Colonic mucosa (tissue), 4 donors: ENCODE measurements at regions of chr10 and their contacts with region 1.

Region 1: DNA sequence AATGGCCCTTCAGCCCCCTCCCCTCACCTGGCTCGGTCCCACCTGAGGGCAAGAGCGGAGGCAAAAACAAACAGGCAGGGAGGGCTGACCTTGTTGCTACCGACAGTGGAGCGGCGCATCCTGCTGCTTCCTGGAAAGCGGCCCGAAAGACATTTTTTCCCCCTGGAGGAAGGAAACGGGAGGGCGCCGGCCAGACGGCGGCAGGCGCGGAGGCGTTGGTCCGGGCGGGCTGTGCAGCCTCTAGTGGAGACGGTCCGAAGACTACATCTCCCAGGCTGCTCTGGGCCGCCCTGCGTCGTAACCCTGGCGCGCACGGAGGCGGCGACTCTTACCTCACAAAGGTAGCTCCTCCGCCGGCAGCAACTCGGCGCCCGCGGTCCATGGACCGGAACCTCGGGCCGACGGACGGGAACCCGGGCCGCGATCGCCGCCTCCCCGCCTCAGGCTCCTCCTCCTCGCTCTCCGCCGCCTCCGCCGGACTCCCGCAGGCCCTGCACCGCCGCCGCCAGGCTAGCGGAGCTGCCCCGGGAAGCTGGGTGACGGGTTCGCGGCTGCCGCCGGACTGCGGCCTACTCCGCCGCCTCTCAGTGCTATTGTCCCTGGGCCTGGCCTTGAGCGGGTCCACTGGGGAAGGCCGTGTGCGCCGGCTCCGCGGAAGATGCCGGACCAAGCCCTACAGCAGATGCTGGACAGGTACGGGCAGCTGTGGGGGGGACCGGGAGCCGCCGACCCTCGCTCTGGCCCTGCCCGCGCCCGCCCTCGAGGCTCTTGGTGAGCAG is at the starts of genes CPEB3 and MARCHF5:
- DNase-seq: peak; percentile 96
- H3K4me3 ChIP-seq: peak within 1 kb of the TSS; percentile 92
- H3K27ac ChIP-seq: peak within 1 kb of the TSS; percentile 92
- H3K4me1 ChIP-seq: no peaks in the 10 kb centered on the region
- H3K27me3 ChIP-seq: no peaks in the 10 kb centered on the region
- CTCF ChIP-seq: peak; percentile 63
- total RNA-seq, gene CPEB3: 4.4 to 7.9 TPM
- total RNA-seq, gene MARCHF5: 37.3 to 42.8 TPM

Region 2: GRCh38 chr10:92087750-92088395 is 203.2 kb before region 1 on chr10:
- intact Hi-C with region 1: loop called (anchors 5 kb)
- DNase-seq: peak; percentile 76
- H3K4me3 ChIP-seq: no peak overlapping the region
- H3K27ac ChIP-seq: no peak overlapping the region
- H3K4me1 ChIP-seq: no peaks in the 10 kb centered on the region
- H3K27me3 ChIP-seq: no peaks in the 10 kb centered on the region
- CTCF ChIP-seq: peak; percentile 61

Region 3: GRCh38 chr10:92240289-92241157 is 50.5 kb before region 1 on chr10:
- intact Hi-C with region 1: loop called (anchors 2 kb)
- DNase-seq: peak; percentile 86
- H3K4me3 ChIP-seq: peak overlapping the region; percentile 67
- H3K27ac ChIP-seq: peak overlapping the region; percentile 73
- H3K4me1 ChIP-seq: no peaks in the 10 kb centered on the region
- H3K27me3 ChIP-seq: no peaks in the 10 kb centered on the region
- CTCF ChIP-seq: no peak